Right ventricle myocardium superior (tissue), 1 donor: ENCODE measurements at regions of chr20 and their contacts with region 1.

Region 1: DNA sequence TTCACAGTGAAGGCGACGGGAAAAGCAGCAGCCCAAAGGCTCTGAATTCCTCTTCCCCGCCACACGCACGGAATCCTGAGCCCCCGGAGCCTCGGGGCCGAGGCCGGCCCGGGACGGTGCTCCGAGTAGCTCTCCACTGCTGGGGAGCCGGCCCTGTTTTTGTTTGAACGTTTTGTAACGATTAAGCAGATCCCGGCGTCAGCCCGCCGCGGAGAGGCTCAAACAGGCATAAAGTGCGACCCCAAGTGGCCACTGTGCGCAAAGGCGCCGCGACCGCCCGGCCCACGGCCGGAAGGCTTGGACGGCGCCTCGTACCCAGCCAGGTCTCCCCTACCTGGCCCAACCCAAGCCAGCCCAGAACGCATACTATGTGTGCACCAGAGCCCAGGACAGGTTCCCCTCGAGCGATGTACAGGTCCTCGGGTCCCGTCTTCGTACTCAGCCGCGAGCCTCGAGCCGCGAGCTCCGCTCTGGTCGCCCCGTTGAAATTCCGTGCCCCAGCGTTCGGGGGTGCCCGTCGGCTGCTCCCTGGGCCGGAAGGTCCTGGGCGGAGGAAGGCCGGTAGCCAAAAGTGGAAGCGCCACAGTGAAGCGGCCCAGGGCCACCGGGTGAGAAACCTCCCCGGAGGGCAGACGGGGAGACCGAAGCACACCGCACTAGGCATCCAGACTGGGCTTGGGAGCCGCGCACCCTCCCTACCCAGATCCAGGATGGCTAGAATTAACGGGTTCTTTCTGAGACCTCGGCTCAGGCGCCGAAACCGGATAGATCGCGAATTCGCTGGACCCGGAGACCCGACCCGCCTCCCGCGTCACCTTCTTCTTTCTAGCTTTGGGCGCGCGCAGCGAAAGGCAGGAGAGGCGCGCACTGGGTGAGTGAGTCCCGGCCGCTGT is 1.2 kb upstream of the MAFB start:
- DNase-seq: peak; percentile 96
- ATAC-seq: peak; percentile 64

Region 2: DNA sequence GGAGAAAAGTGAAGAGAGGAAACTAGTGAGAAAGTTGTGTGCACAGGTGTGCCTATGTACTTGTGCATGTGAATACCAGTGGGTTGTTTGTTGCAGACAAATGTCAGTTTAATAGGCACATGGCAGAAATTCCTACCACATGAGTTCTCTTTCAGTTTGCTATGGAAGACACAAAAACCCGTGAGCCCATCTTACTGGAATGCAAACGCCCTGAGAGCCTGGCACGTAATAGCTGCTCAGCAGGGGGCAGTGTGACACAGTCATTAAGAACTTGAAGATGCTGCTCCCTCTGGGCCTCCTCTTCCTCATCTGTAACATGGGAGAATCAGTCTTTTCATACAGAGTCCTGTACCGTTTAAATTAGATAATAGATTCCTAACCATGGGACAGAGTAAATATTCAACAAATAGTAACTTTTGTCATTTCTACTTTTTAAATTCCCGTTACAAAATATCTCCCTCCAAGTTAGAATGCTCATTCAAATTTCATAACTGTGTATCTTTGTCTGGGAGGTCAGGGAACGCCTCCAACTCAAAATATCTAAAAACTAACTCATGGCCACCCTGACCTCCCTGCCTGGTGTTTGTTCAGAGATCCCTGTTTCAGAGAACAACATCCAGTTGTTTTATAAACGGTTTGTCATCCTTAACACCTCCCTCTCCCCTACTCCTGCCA is 804.1 kb before region 1 on chr20:
- intact Hi-C with region 1: loop called (anchors 10 kb)
- DNase-seq: peak; percentile 83
- ATAC-seq: peak; percentile 90

Region 3: GRCh38 chr20:40156600-40157317 is 533.4 kb before region 1 on chr20:
- intact Hi-C with region 1: loop called (anchors 10 kb)
- DNase-seq: no peak
- ATAC-seq: no peak

Region 4: GRCh38 chr20:40255365-40255764 is 434.8 kb before region 1 on chr20:
- intact Hi-C with region 1: loop called (anchors 5 kb)
- DNase-seq: no peak
- ATAC-seq: peak; percentile 53

Region 5: GRCh38 chr20:40286975-40287531 is 403.1 kb before region 1 on chr20:
- intact Hi-C with region 1: loop called (anchors 10 kb)
- DNase-seq: peak; percentile 90
- ATAC-seq: peak; percentile 98